Activated CD4-positive, alpha-beta T cell treated with anti-CD3 and anti-CD28 coated beads for 36 hours (primary cell): ENCODE measurements at regions of chr1 and their contacts with region 1.

Region 1: DNA sequence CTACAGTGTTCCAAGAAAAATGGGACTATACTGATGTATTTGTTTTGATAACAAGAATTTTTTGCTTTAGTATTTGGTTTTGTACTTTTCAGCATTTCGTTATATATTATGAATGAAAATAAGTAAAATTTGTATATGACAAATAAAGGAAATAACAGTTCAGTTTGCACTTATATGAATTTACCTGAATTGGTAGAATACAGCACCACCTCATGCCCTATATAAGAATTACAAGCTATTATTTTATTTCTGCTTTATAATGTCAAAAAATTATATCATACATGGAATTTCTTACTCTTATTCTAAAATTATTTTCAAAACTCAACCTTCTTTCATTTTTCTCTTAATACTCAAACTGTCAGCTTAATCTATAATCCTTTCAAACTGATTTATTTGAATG is 14.6 kb downstream of the EFCAB7 start:
- DNase-seq: no peak
- ATAC-seq: no peak
- H3K4me3 Mint-ChIP-seq: no peak overlapping the region
- H3K27ac Mint-ChIP-seq: no peak overlapping the region
- H3K4me1 Mint-ChIP-seq: no peaks in the 10 kb centered on the region
- H3K27me3 Mint-ChIP-seq: no peaks in the 10 kb centered on the region

Region 2: GRCh38 chr1:62962901-62963776 is 574.8 kb before region 1 on chr1:
- CTCF ChIA-PET with region 1: interaction called, 3 read pairs
- POLR2A ChIA-PET with region 1: no interaction called
- intact Hi-C with region 1: loop called in 1 of 2 experiments (anchors 5 kb)
- DNase-seq: peak; percentile 57
- ATAC-seq: no peak
- H3K4me3 Mint-ChIP-seq: no peak overlapping the region
- H3K27ac Mint-ChIP-seq: no peak overlapping the region
- H3K4me1 Mint-ChIP-seq: no peaks in the 10 kb centered on the region
- H3K27me3 Mint-ChIP-seq: peaks cover 8% of the 10 kb centered on the region

Region 3: DNA sequence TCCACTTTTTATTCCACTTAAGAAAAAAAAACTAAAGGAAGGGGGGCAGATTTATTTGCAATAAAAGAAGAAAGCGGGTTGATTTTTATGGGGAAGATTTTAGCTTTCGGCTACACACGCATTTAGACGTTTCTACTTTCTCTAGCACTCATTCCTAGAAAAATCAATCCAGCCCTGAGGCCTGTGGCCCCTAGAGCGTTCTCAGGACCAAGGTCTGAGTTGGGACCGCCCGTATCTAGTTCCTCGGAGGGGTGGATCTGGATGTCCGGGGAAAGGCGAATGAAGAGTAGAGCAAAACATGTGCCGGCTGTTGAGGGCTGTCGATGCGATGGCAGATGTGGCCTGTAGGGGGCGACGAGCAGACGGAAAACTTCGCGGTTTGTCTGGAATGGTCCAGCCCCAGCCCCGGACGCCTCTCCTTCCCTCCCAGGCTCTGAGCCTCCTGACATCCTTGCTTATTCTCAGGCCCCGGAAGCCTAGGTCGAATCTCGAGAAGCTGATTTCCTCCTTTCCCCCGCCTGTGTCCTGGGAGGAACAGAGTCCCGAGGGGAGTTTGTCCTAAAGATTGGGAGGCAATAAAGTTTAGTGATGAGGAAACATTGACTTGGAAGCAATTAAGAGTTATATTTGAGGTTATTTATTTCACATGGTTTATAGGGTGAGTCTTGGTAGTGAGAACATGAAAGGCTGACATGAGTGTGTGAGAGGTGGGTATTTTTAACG is 210.4 kb before region 1 on chr1:
- CTCF ChIA-PET with region 1: interaction called, 3 read pairs
- POLR2A ChIA-PET with region 1: no interaction called
- intact Hi-C with region 1: loop called in 1 of 2 experiments (anchors 1 kb)
- DNase-seq: peak; percentile 79
- ATAC-seq: peak; percentile 61
- H3K4me3 Mint-ChIP-seq: peak overlapping the region; percentile 0
- H3K27ac Mint-ChIP-seq: no peak overlapping the region
- H3K4me1 Mint-ChIP-seq: peaks cover 24% of the 10 kb centered on the region
- H3K27me3 Mint-ChIP-seq: peaks cover 61% of the 10 kb centered on the region

Region 4: DNA sequence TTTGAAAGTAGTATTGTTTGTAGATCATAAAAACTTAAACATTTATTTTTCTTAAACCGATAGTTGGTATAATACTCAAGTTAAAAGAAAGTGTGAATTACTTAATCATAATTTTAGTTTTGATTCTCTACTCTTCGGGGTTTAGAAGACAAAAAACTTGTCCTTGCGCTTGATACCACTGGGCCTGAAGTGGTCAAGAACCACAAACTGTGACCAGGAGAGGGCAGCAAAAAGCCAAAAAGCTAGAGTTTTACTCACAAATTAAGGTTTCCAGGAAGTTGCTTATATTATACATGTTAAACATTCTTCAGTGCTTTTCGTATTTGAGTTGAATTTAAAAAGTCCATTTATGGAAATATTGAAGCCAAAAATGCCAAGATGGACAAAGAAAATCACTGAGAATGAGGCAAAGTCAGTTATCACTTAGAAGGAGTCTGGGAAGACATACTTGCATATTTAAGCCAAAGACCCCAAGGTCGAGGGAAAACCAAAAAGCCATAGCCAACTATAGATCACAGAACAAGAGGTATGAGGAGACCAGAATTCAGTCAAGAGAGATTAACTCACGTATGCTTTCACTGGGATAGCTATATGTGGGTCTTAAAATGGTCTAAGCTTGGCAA is 19.5 kb after region 1 on chr1:
- CTCF ChIA-PET with region 1: interaction called, 10 read pairs
- POLR2A ChIA-PET with region 1: no interaction called
- intact Hi-C with region 1: no loop called
- DNase-seq: peak; percentile 44
- ATAC-seq: no peak
- H3K4me3 Mint-ChIP-seq: no peak overlapping the region
- H3K27ac Mint-ChIP-seq: no peak overlapping the region
- H3K4me1 Mint-ChIP-seq: no peaks in the 10 kb centered on the region
- H3K27me3 Mint-ChIP-seq: no peaks in the 10 kb centered on the region

Region 5: GRCh38 chr1:63861052-63861691 is 323.2 kb after region 1 on chr1:
- CTCF ChIA-PET with region 1: no interaction called
- POLR2A ChIA-PET with region 1: no interaction called
- intact Hi-C with region 1: no loop called
- DNase-seq: no peak
- ATAC-seq: no peak
- H3K4me3 Mint-ChIP-seq: no peak overlapping the region
- H3K27ac Mint-ChIP-seq: no peak overlapping the region
- H3K4me1 Mint-ChIP-seq: no peaks in the 10 kb centered on the region
- H3K27me3 Mint-ChIP-seq: no peaks in the 10 kb centered on the region